OCI-LY7 (cell line): ENCODE measurements at regions of chr4 and their contacts with region 1.

Region 1: DNA sequence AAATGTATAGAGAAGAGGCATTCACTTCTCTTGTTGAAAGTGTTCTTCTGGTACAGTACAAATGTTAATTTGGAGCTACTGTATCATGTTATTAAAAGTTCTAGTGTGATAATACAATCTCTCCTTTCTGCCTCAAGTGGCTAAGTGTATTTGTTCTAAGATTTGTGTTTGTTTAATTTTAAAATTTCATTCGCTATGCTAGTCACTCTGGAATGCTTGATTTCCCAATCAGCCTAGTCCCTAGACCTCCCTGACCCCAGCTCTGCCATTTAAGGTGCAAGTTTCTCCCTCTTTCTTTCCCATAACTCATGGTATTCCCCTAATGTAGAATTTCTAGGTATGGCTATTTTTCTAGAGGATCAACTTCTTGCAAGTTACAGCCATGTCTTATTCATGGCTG is 817.4 kb downstream of the STIM2 start:
- DNase-seq: no peak
- H3K4me3 ChIP-seq: no peak overlapping the region
- H3K27ac ChIP-seq: no peak overlapping the region
- H3K4me1 ChIP-seq: no peaks in the 10 kb centered on the region
- CTCF ChIP-seq: no peak

Region 2: DNA sequence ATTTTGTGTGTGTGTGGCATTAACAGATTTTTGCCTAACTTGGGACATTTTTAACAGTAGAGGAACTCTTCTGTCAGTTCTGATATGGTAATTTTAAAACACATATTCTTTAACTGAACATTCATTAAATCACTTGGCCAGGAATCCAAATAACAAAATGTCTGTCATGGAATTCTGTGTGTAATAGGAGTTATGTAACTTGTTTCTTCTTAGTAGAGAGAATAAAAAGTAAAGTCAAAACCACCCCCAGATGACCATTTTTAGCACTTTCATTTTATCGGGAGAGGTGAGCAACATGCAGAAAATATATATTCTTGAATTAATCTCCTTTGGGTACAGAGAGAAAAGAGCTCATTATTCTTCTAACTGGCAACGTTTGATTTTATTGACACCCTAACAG is 922.9 kb after region 1 on chr4:
- CTCF ChIA-PET with region 1: no interaction called
- POLR2A ChIA-PET with region 1: interaction called, 10 read pairs
- intact Hi-C with region 1: no loop called
- DNase-seq: no peak
- H3K4me3 ChIP-seq: no peak overlapping the region
- H3K27ac ChIP-seq: no peak overlapping the region
- H3K4me1 ChIP-seq: no peaks in the 10 kb centered on the region
- CTCF ChIP-seq: no peak